Posterior cingulate gyrus (tissue), 11 donors: ENCODE measurements at regions of chr6 and their contacts with region 1.

Region 1: DNA sequence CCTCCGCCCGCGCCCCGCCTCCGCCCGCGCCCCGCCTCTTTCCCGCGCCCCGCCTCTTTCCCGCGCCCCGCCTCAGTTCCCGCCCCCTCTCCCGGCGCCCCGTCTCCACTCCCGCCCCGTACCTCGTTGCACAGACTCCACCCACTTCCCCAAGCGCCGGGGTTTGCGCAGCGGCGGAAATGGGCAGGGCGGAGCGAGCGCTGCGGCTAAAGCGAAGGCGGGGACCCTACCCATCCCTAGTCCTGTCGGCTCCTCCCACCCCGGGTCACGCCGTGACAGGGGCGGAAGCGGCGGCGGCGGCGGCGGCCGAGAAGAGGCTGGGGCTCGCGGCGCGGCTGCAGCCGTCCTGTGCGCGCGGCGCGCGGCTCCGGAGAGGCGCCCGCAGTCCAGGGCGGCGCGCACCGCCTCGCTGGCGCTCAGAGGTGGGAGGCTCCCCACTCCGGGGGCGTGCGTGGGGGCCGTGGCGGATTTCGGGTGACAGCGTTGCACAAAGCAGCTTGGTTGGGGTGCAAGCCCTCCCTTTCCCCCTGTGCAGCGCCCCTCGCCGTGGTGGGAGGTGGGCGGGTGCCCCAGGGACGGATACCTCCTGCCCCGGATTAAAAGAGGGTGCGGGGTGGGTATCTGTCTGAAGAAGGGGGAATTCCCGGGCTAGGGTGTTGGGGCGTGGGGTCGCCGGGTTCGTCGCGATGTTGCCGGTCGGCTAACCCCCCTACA is at the start of gene KDM1B:
- DNase-seq: peak; percentile 98 to 100 (median 99)

Region 2: GRCh38 chr6:17884498-17885478 is 270.5 kb before region 1 on chr6:
- intact Hi-C with region 1: no loop called
- DNase-seq: no peak

Region 3: GRCh38 chr6:18115356-18115755 is 40.0 kb before region 1 on chr6:
- intact Hi-C with region 1: no loop called
- DNase-seq: no peak

Region 4: GRCh38 chr6:18264219-18264922 is 109.1 kb after region 1 on chr6 and contains the start of gene DEK:
- intact Hi-C with region 1: loop called (anchors 1 kb)
- DNase-seq: peak; percentile 78 to 97 (median 84)